Caco-2 (cell line): ENCODE measurements at regions of chr2 and their contacts with region 1.

Region 1: GRCh38 chr2:62660582-62661262 is 44.8 kb upstream of the EHBP1 start:
- DNase-seq: no peak
- H3K4me3 ChIP-seq: no peak overlapping the region
- H3K4me3 Mint-ChIP-seq: no peak overlapping the region
- H3K27ac Mint-ChIP-seq: no peak overlapping the region
- H3K4me1 ChIP-seq: peaks cover 32% of the 10 kb centered on the region
- H3K4me1 Mint-ChIP-seq: peaks cover 40% of the 10 kb centered on the region
- H3K27me3 ChIP-seq: no peaks in the 10 kb centered on the region
- H3K27me3 Mint-ChIP-seq: no peaks in the 10 kb centered on the region
- CTCF ChIP-seq: no peak

Region 2: DNA sequence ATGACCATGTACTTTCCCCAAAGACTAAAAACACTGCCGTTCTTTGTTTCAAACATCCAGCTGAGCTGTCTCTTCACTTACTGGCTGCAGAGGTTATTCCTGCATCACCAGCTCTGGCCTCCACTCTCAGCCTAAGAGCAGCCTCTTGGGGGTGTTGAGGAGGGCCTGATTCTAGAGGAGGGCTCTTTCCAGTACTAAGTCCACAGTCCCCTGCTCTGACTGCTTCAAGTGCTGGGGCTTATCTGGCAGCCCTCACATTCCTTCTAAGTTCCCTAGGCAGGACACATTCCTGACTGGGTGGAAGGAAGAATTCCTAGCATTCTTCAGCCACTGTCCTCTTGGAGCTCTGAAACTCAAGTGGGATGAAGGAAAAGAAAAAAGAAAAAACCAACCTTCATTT is 11.9 kb after region 1 on chr2:
- CTCF ChIA-PET with region 1: no interaction called
- POLR2A ChIA-PET with region 1: no interaction called
- intact Hi-C with region 1: loop called (anchors 1 kb)
- DNase-seq: peak; percentile 90 to 97
- H3K4me3 ChIP-seq: no peak overlapping the region
- H3K4me3 Mint-ChIP-seq: peak overlapping the region; percentile 48
- H3K27ac Mint-ChIP-seq: no peak overlapping the region
- H3K4me1 ChIP-seq: peaks cover 55% of the 10 kb centered on the region
- H3K4me1 Mint-ChIP-seq: peaks cover 23% of the 10 kb centered on the region
- H3K27me3 ChIP-seq: no peaks in the 10 kb centered on the region
- H3K27me3 Mint-ChIP-seq: no peaks in the 10 kb centered on the region
- CTCF ChIP-seq: peak in 1 of 2 experiments; percentile 15

Region 3: GRCh38 chr2:62774555-62775366 is 114.0 kb after region 1 on chr2:
- CTCF ChIA-PET with region 1: no interaction called
- POLR2A ChIA-PET with region 1: no interaction called
- intact Hi-C with region 1: loop called (anchors 5 kb)
- DNase-seq: peak in 1 of 2 experiments; percentile 60
- H3K4me3 ChIP-seq: no peak overlapping the region
- H3K4me3 Mint-ChIP-seq: no peak overlapping the region
- H3K27ac Mint-ChIP-seq: peak overlapping the region; percentile 69
- H3K4me1 ChIP-seq: 0 out of 2 replicates have a peak, but pooled peaks cover 5% of the 10 kb centered on the region
- H3K4me1 Mint-ChIP-seq: peaks cover 29% of the 10 kb centered on the region
- H3K27me3 ChIP-seq: no peaks in the 10 kb centered on the region
- H3K27me3 Mint-ChIP-seq: no peaks in the 10 kb centered on the region
- CTCF ChIP-seq: peak; percentile 72 to 86